ENCODE measurements at regions of chr2 and their contacts with region 1.

Region 1: GRCh38 chr2:102020596-102021181 is 28.9 kb downstream of the IL1R2 start:
- DNase-seq: peak; percentile 94
- H3K4me3 ChIP-seq: no peak overlapping the region
- H3K27ac ChIP-seq: no peak overlapping the region
- H3K4me1 ChIP-seq: peaks cover 0 to 12% (median 4%) of the 10 kb centered on the region in 4 donors
- H3K27me3 ChIP-seq: no peaks in the 10 kb centered on the region
- CTCF ChIP-seq: peak; percentile 96 to 98 (median 97)
- EP300 ChIP-seq: no peak
- POLR2A ChIP-seq: no peak

Region 2: GRCh38 chr2:101883863-101884262 is 136.8 kb before region 1 on chr2:
- intact Hi-C with region 1: loop called (anchors 10 kb)
- DNase-seq: no peak
- H3K4me3 ChIP-seq: no peak overlapping the region
- H3K27ac ChIP-seq: no peak overlapping the region
- H3K4me1 ChIP-seq: peaks cover 0 to 19% (median 0%) of the 10 kb centered on the region in 4 donors
- H3K27me3 ChIP-seq: no peaks in the 10 kb centered on the region
- CTCF ChIP-seq: peak; percentile 45 to 58 (median 49)
- EP300 ChIP-seq: no peak
- POLR2A ChIP-seq: no peak

Region 3: GRCh38 chr2:102063941-102064678 is 43.4 kb after region 1 on chr2:
- intact Hi-C with region 1: loop called (anchors 5 kb)
- DNase-seq: peak; percentile 98
- H3K4me3 ChIP-seq: peak overlapping the region in 1 of 4 donors; percentile 4
- H3K27ac ChIP-seq: peak overlapping the region; percentile 89 to 98 (median 94)
- H3K4me1 ChIP-seq: peaks cover 0 to 79% (median 68%) of the 10 kb centered on the region in 4 donors
- H3K27me3 ChIP-seq: no peaks in the 10 kb centered on the region
- CTCF ChIP-seq: no peak
- EP300 ChIP-seq: peak; percentile 55 to 99 (median 94)
- POLR2A ChIP-seq: no peak

Region 4: GRCh38 chr2:102103992-102104871 is 83.5 kb after region 1 on chr2:
- intact Hi-C with region 1: loop called (anchors 5 kb)
- DNase-seq: peak; percentile 92
- H3K4me3 ChIP-seq: peak overlapping the region; percentile 22 to 41 (median 36)
- H3K27ac ChIP-seq: peak overlapping the region; percentile 60 to 81 (median 72)
- H3K4me1 ChIP-seq: peaks cover 0 to 51% (median 20%) of the 10 kb centered on the region in 4 donors
- H3K27me3 ChIP-seq: no peaks in the 10 kb centered on the region
- CTCF ChIP-seq: no peak
- EP300 ChIP-seq: no peak
- POLR2A ChIP-seq: no peak

Region 5: DNA sequence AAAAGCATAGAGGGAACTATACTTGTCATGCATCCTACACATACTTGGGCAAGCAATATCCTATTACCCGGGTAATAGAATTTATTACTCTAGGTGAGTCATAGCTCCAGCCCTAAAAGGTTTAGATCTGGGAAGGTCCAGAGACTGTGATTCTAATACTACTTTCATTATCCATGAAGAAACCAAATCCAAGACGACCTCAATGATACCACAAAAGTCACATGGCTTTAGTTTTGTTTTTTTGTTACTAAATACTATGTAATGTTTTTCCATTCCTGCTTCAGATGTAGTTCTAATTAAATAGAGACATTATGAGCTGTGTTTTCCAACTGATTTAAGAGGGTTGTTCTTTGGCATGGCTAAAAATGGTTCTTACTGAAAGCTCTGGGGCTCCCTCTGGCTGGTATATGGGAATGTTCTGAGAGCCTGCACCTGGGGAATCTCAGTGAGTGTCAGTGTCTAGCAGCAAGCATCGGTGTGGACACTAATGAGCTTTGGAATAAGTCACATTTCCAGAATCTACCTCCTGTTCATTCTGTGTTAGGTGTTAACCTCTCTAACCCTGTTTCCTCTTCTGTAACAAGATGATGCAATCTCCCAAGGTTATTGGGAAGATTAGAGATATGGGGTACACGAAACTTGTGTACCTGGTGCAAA is 145.6 kb after region 1 on chr2:
- intact Hi-C with region 1: loop called (anchors 1 kb)
- DNase-seq: peak; percentile 77
- H3K4me3 ChIP-seq: no peak overlapping the region
- H3K27ac ChIP-seq: peak overlapping the region in 2 of 4 donors; percentile 30 to 52
- H3K4me1 ChIP-seq: peaks cover 0 to 16% (median 2%) of the 10 kb centered on the region in 4 donors
- H3K27me3 ChIP-seq: no peaks in the 10 kb centered on the region
- CTCF ChIP-seq: peak; percentile 71 to 78 (median 72)
- EP300 ChIP-seq: no peak
- POLR2A ChIP-seq: no peak

Region 6: GRCh38 chr2:102240640-102241370 is 220.1 kb after region 1 on chr2:
- intact Hi-C with region 1: loop called (anchors 1 kb)
- DNase-seq: peak; percentile 96
- H3K4me3 ChIP-seq: no peak overlapping the region
- H3K27ac ChIP-seq: peak overlapping the region; percentile 51 to 63 (median 54)
- H3K4me1 ChIP-seq: peaks cover 0 to 11% (median 4%) of the 10 kb centered on the region in 4 donors
- H3K27me3 ChIP-seq: no peaks in the 10 kb centered on the region
- CTCF ChIP-seq: peak; percentile 89 to 96 (median 94)
- EP300 ChIP-seq: no peak
- POLR2A ChIP-seq: no peak

Region 7: DNA sequence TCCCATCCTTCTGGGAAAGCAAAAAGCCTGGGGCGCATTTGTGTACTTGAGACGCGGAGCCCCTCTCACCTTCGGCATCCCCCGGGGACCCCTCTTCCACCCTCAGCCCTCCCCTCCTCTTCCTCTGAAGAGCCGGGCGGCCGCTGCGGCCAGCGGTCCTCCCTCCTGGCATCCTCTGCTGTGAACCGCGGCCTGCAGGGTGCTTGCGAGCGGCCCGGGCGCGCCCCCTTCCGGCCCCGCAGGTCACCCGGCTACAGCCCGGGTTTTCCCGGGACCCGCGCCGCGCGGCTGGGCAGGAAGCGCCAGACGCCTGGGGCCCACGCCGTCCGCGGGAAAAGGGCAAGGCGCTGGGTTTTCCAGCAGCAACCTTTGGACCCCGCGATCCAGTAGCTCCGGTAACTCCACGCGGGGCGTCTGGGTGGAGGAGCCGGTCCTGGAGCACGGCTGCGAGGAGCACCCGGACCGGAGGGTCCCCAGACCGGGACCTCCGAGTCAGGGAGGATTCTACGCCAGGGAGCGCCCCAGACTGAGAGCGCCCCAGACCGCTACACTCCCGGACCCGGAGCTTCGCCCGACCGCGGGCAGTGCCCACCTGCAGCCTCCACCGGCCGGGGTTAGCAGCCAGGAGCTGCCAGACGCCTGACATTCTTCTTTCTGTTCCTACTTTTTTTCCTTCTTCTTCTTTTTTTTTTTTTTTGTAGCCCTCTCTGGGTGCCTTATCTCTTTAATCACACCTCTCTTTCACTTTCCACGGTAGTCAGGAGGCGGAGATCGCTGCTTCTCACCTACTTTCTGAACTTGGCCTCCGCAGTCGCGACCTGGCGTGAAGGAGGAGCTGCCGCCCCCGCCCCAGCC is 335.1 kb after region 1 on chr2 and contains the start of gene IL18R1:
- intact Hi-C with region 1: loop called (anchors 10 kb)
- DNase-seq: peak; percentile 84
- H3K4me3 ChIP-seq: peak within 1 kb of the TSS; percentile 44 to 78 (median 68)
- H3K27ac ChIP-seq: peak within 1 kb of the TSS in 3 of 4 donors; percentile 44 to 59 (median 50)
- H3K4me1 ChIP-seq: peaks cover 0 to 12% (median 8%) of the 10 kb centered on the region in 4 donors
- H3K27me3 ChIP-seq: no peaks in the 10 kb centered on the region
- CTCF ChIP-seq: peak; percentile 38 to 85 (median 42)
- EP300 ChIP-seq: no peak
- POLR2A ChIP-seq: no peak
- total RNA-seq, gene IL18R1: 1.1 to 5.2 (median 2.4) TPM

Measured in sigmoid colon (tissue), 7 donors.